ENCODE measurements at regions of chr6 and their contacts with region 1.

Region 1: GRCh38 chr6:30396833-30397479 is 52.0 kb downstream of the RPP21 start:
- DNase-seq: peak; percentile 85 to 94 (median 93)
- ATAC-seq: peak; percentile 90 to 98
- H3K4me3 ChIP-seq: no peak overlapping the region
- H3K27ac ChIP-seq: no peak overlapping the region
- H3K4me1 ChIP-seq: no peaks in the 10 kb centered on the region
- H3K27me3 ChIP-seq: peaks cover 3% of the 10 kb centered on the region

Region 2: DNA sequence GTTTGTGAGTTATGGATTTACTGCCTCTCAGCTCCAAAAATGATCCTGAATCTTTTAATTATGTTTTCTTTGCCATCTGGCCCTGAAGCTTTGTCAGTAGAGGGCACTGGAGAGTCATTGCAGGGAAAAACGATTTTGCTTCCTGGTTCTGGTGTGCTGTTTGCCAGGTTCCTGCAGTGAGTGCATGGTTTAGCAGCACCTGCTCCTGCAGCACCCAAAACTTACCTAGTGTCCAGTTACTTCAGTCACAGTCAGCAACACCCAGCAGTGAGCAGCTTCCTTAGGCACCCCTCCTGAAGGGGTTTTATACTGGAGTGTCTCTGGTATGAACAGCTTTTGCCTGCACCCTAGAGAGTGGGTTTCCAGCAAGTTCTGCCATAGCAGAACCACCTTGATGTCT is 177.7 kb before region 1 on chr6:
- intact Hi-C with region 1: loop called in 2 of 4 experiments (anchors 5 to 10 kb)
- DNase-seq: no peak
- ATAC-seq: peak; percentile 44 to 49
- H3K4me3 ChIP-seq: no peak overlapping the region
- H3K27ac ChIP-seq: no peak overlapping the region
- H3K4me1 ChIP-seq: no peaks in the 10 kb centered on the region
- H3K27me3 ChIP-seq: no peaks in the 10 kb centered on the region

Region 3: DNA sequence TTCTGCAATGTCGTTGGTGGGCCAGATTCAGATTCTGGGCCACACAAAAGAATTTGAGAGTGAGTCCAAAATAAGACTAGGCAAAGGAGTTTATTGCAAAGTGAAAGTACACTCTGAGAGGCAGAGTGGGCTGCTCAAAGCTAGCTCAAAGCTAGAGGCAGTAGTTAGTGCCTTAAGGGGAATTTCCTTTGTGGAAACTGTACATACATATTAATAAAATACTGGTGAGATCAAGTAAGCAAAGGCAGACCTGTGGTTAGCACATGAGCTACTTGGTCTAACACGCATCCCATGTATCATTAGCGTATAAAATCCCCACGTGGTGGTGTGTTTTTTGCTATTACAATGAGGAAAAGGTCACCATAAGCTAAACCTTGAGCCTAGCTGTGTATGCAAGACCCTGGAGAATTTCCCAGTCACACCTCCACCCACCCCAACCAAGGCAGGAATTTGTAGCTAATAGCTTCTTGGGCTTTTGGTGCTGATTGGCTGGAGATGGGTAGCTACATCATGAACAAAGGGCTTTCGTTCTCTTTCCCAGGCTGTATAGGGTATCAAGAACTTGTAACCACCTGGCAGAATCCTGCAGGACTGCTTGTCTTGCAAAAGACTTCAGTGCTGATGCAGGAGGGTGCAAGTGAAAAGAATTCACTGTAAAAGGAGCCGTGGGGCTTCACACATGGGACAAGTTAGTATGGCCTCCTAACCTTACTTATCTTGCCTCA is 169.0 kb before region 1 on chr6:
- intact Hi-C with region 1: loop called in 1 of 4 experiments (anchors 10 kb)
- DNase-seq: no peak
- ATAC-seq: no peak
- H3K4me3 ChIP-seq: no peak overlapping the region
- H3K27ac ChIP-seq: no peak overlapping the region
- H3K4me1 ChIP-seq: no peaks in the 10 kb centered on the region
- H3K27me3 ChIP-seq: no peaks in the 10 kb centered on the region

Region 4: DNA sequence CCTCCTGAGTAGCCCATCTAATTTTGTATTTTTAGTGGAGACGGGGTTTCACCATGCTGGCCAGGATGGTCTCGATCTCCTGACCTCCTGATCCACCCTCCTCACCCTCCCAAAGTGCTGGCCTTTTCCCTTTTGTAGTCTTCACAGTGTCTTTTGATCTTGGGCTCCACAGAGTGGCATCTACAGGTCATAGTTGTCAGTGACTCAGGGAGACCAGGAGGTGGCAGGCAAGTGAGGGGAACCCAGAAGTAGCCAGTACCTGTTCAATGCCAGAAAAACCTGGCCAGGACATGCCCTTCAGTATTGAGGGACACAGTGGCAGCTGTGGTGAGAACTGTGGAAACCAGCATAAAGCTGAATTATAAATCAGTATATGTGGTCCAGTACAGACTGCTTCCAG is 32.4 kb before region 1 on chr6:
- intact Hi-C with region 1: loop called in 1 of 4 experiments (anchors 5 kb)
- DNase-seq: no peak
- ATAC-seq: no peak
- H3K4me3 ChIP-seq: no peak overlapping the region
- H3K27ac ChIP-seq: no peak overlapping the region
- H3K4me1 ChIP-seq: no peaks in the 10 kb centered on the region
- H3K27me3 ChIP-seq: no peaks in the 10 kb centered on the region